ENCODE measurements at regions of chr1 and their contacts with region 1.

Region 1: DNA sequence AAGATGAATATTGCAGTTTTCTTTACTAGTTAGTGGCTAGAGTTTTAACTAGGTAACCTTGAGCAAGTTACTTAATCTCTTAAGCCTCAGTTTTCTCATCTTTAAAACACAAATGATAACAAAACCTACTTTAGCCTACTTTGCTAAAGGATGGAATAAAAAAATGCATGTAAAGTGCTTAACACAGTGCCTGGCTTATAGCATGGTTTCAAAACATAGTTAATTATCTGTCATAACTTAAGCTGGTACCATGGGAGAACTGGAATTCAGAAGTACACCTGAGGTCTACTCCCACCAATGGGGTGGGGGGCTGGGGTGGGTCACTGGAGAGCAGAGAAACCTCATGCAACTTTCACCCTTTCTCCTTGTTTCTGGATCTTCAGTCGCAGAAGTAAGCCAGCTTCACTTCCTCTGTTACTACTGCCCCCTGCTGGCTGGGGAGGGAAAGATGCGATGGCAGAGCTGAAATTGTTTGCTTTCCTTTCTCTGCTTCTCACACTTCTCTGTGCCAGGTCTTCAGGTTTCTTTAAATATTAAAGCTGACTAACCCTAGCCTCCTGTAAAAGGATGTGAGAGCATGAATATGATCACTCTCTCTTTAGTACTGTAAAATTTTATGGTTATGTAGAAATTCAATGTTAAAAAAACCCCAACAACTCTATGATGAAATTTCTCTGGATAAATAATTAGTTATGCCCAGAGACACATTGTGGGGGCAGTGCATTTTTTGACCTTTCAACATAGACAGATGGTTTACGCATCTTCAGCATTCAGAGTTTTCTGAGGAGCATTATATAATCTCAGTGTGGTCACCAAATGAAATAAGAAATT is 324.2 kb downstream of the HLX start:
- DNase-seq: peak; percentile 90
- H3K4me3 Mint-ChIP-seq: no peak overlapping the region
- H3K27ac Mint-ChIP-seq: no peak overlapping the region
- H3K4me1 Mint-ChIP-seq: no peaks in the 10 kb centered on the region
- H3K27me3 Mint-ChIP-seq: no peaks in the 10 kb centered on the region
- CTCF ChIP-seq: peak; percentile 86

Region 2: DNA sequence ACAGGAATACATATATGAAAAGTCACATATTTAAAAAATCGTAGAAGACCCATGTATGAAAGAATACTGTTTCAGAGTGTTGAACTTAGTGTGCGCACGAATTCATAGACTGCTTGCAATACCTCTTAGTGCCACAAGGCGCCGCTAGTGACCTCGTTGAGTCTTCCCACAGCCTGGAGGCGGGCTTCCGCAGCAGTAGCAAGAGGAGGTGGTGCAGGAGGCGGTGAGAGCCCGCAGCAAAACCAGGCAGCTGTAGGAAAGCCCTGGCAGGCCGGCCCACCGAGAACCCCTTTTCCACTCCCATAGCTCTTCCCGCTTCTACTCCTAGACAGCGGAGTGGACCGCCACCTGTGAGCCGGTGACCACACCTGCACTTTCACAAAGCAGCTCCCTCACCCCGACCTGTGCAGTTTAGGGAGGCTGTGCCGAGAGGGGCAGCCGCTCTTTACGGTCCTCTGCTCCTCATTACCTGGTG is 393.2 kb before region 1 on chr1:
- CTCF ChIA-PET with region 1: no interaction called
- intact Hi-C with region 1: loop called (anchors 5 kb)
- DNase-seq: peak; percentile 46
- H3K4me3 Mint-ChIP-seq: no peak overlapping the region
- H3K27ac Mint-ChIP-seq: no peak overlapping the region
- H3K4me1 Mint-ChIP-seq: no peaks in the 10 kb centered on the region
- H3K27me3 Mint-ChIP-seq: no peaks in the 10 kb centered on the region
- CTCF ChIP-seq: peak; percentile 73

Region 3: DNA sequence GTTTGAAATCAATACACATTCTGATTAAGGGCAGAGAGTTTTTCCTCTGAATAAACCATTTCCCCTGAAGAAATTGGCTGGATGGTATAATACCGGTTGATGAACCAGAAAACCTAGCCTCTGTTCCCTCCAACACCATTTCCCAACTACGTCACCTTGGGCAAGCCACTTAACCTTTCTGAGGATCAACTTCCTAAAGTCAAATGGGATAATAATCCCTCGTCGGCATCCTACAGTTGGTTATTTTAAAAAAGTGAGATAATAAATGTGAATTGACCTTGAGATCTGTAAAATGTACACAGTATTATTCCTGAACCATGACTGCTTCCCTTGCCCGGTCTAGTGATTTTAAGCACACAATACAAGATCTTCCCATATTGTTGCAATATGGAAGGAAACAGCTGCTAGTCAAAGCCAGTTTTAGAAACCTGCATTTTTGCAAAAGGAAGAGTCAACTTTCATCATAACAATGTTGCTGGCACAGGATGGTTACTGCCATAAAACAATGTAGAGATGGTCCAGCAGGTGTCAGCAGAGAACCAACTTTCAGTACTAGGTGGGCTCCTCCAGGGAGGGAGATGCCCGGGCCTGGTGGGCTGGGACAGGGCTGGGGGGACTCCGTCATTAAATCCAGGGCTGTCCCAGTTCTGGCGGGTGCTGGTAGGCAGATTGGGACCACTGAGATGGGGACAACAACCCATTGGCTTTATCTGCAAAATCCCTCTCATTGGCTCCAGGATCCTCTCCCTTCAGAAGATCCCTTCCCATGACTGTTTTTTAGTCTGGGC is 329.4 kb before region 1 on chr1:
- CTCF ChIA-PET with region 1: interaction called, 3 read pairs
- intact Hi-C with region 1: loop called (anchors 1 kb)
- DNase-seq: peak; percentile 56
- H3K4me3 Mint-ChIP-seq: no peak overlapping the region
- H3K27ac Mint-ChIP-seq: no peak overlapping the region
- H3K4me1 Mint-ChIP-seq: peaks cover 15% of the 10 kb centered on the region
- H3K27me3 Mint-ChIP-seq: no peaks in the 10 kb centered on the region
- CTCF ChIP-seq: peak; percentile 74

Region 4: DNA sequence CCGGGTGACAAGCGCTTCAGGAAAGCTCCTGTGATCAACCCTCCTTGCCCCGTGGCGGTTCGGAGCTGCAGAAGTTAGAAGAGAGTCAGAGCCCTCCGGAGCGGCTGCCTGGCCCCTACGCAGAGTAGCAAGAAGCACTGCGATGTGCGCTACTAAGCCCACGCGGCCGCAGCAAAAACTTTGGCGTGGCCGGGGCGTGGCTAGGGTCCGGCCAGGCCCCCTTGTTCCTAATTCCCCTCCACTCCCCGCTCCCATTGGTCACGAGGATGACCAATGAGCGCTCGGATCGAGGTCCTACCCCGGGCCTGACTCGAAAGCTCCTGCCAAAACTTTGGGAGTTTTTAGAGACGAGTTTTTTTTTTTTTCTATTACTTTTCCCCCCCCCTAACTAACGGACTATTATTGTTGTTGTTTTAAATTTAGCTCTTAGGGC is 324.3 kb before region 1 on chr1 and contains the start of gene HLX:
- CTCF ChIA-PET with region 1: interaction called, 3 read pairs
- intact Hi-C with region 1: loop called (anchors 1 kb)
- DNase-seq: peak; percentile 64
- H3K4me3 Mint-ChIP-seq: peak within 1 kb of the TSS; percentile 83
- H3K27ac Mint-ChIP-seq: no peak within 1 kb of the TSS
- H3K4me1 Mint-ChIP-seq: no peaks in the 10 kb centered on the region
- H3K27me3 Mint-ChIP-seq: peaks cover 38% of the 10 kb centered on the region
- CTCF ChIP-seq: no peak
- total RNA-seq, gene HLX: 0.09 and 0.32 TPM in 2 replicates

Region 5: GRCh38 chr1:220908757-220909156 is 294.7 kb before region 1 on chr1:
- CTCF ChIA-PET with region 1: interaction called, 21 read pairs
- intact Hi-C with region 1: loop called (anchors 1 kb)
- DNase-seq: peak; percentile 33
- H3K4me3 Mint-ChIP-seq: no peak overlapping the region
- H3K27ac Mint-ChIP-seq: no peak overlapping the region
- H3K4me1 Mint-ChIP-seq: peaks cover 28% of the 10 kb centered on the region
- H3K27me3 Mint-ChIP-seq: peaks cover 2% of the 10 kb centered on the region
- CTCF ChIP-seq: peak; percentile 49

Region 6: GRCh38 chr1:220990427-220991339 is 212.8 kb before region 1 on chr1:
- CTCF ChIA-PET with region 1: no interaction called
- intact Hi-C with region 1: loop called (anchors 5 kb)
- DNase-seq: no peak
- H3K4me3 Mint-ChIP-seq: no peak overlapping the region
- H3K27ac Mint-ChIP-seq: no peak overlapping the region
- H3K4me1 Mint-ChIP-seq: peaks cover 10% of the 10 kb centered on the region
- H3K27me3 Mint-ChIP-seq: no peaks in the 10 kb centered on the region
- CTCF ChIP-seq: no peak

Region 7: GRCh38 chr1:221032637-221033280 is 170.7 kb before region 1 on chr1:
- CTCF ChIA-PET with region 1: no interaction called
- intact Hi-C with region 1: no loop called
- DNase-seq: no peak
- H3K4me3 Mint-ChIP-seq: no peak overlapping the region
- H3K27ac Mint-ChIP-seq: no peak overlapping the region
- H3K4me1 Mint-ChIP-seq: peaks cover 11% of the 10 kb centered on the region
- H3K27me3 Mint-ChIP-seq: no peaks in the 10 kb centered on the region
- CTCF ChIP-seq: no peak